Uterus (tissue), 4 donors: ENCODE measurements at regions of chr7 and their contacts with region 1.

Region 1: DNA sequence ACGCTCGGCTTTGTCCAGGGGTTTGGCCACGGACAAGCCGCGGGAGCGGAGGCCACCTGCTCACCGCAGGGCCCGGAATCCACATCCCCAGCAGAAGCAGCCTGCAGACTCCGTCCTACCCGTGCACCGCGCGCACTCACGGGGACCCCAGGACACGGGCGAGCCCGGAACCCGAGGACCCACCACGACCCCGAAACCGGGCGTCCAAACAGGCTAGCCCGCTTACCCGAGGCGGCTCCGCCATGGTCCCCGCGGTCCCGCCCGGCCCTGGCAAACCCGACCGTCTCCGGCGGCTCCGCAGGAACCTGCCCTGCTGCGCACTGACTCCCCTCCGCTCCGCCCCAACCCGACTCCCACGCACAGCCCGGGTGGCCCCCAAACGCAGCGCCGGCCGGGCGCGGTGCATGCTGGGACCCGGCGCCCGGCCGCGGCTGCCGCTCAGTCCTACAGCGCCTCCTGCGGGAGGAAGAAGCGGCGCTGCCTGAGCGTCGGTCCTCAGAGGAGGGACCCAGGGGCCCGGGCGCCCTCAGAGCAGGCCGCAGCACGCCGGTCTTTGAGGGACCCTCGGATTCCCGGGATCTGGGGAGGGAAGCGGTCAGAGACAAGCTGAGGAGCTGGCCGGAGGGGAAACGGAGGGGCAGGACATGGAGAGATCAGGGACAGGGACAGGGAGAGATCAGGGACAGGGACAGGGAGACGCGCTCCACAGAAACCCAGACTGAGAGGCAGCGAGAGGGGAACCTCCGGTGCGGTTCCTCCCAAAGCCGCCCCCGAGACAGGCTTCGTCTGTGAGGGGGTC is at the start of gene ZNF786:
- DNase-seq: peak; percentile 88 to 94
- H3K4me3 ChIP-seq: peak within 1 kb of the TSS; percentile 83 to 86
- H3K27ac ChIP-seq: peak within 1 kb of the TSS; percentile 96 to 98
- H3K4me1 ChIP-seq: no peaks in the 10 kb centered on the region
- H3K27me3 ChIP-seq: no peaks in the 10 kb centered on the region
- CTCF ChIP-seq: peak; percentile 85 to 98 (median 97)
- POLR2A ChIP-seq: peak; percentile 34 to 90
- total RNA-seq, gene ZNF786: 3.6 to 13.7 (median 9.7) TPM

Region 2: GRCh38 chr7:149005241-149006050 is 85.2 kb before region 1 on chr7:
- intact Hi-C with region 1: loop called (anchors 10 kb)
- DNase-seq: peak; percentile 79 to 88
- H3K4me3 ChIP-seq: no peak overlapping the region
- H3K27ac ChIP-seq: no peak overlapping the region
- H3K4me1 ChIP-seq: no peaks in the 10 kb centered on the region
- H3K27me3 ChIP-seq: no peaks in the 10 kb centered on the region
- CTCF ChIP-seq: peak; percentile 81 to 90 (median 84)
- POLR2A ChIP-seq: no peak

Region 3: DNA sequence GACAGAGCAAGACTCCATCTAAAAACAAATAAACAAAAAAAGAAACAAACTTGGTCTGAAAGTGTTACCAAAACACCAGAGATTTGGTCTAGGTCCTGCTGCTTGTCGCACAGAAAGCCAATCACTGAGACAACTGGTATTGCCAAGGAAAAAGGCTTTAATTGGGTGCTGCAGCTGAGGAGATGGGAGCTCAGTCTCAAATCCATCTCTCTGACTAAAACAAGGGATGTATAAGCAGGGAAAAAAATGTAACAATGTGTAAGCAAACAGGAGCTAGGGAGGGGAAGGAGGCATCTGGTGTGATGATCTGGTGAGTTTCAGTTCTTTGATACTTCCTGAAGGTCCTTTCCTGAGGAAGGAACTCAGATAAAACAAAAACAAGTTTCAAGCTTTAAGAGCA is 53.9 kb before region 1 on chr7:
- intact Hi-C with region 1: no loop called
- DNase-seq: no peak
- H3K4me3 ChIP-seq: no peak overlapping the region
- H3K27ac ChIP-seq: no peak overlapping the region
- H3K4me1 ChIP-seq: no peaks in the 10 kb centered on the region
- H3K27me3 ChIP-seq: no peaks in the 10 kb centered on the region
- CTCF ChIP-seq: no peak
- POLR2A ChIP-seq: no peak

Region 4: DNA sequence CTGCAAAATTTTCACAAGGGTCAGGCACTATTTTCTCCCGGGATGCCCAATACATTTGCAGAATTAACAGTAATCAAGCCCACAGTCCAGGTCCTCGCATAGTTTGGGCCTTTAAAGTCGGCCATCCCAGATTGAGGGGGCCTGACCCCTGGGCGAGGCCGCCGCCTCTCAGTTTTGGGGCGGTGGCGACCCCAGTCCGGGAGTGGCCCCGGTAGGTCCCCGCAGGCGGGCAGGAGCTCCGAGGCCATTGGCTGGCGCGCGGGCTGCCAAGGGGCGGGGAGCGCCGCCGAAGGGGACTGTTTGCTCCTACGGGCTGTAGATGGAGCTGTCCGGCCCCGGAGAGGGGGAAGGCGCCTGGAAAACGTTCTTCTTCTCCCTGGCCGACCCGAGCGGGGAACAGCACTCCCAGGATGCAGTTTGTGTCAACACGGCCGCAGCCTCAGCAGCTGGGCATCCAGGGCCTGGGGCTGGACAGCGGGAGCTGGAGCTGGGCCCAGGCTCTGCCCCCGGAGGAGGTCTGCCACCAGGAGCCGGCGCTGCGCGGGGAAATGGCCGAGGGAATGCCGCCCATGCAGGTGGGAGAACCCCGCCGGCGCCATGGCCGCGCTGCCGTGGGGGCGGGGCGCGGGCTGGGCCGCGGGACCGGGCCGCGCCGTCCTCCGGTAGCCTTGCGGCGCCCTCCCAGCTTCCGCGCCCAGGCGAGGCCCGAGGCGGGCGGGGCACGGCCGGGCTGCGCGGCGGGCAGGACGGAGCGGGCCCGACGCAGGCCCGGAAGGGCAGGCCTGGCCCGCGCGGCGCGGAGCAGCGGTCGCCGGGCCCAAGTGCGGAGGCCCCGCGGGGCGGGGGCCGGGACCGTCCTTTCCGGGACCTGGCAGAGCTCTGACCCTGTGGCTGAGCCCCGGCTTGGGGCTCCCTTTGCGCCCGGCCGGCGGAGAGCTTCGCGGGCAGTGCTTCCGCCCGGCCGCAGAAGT is 104.9 kb after region 1 on chr7 and contains the start of gene ZNF282:
- intact Hi-C with region 1: no loop called
- DNase-seq: peak; percentile 83 to 84
- H3K4me3 ChIP-seq: peak within 1 kb of the TSS; percentile 82 to 86
- H3K27ac ChIP-seq: peak within 1 kb of the TSS; percentile 91 to 93
- H3K4me1 ChIP-seq: peaks cover 0 to 11% of the 10 kb centered on the region in 2 donors
- H3K27me3 ChIP-seq: no peaks in the 10 kb centered on the region
- CTCF ChIP-seq: peak; percentile 46 to 83 (median 54)
- POLR2A ChIP-seq: peak in 1 of 2 donors; percentile 54
- total RNA-seq, gene ZNF282: 3.2 to 36.4 (median 24.1) TPM

Region 5: DNA sequence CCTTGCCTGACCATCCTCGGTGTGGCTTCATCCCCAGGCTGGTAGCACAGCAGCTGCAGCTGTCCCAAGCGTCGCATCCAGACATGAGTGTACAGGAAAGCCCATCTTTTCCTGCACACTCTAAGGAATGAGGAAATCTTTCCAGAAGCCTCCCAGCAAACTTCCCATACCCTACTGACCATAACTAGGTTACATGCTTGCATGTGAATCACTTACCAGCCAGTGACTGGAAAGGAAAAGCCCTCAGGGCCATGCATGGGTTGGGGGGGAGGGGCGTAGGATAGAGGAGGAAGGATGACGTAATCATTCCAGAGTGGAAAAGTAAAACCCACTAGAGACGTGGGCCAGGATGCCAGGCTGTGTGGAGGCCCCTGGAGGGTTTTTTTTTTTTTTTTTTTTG is 129.9 kb after region 1 on chr7:
- intact Hi-C with region 1: no loop called
- DNase-seq: no peak
- H3K4me3 ChIP-seq: no peak overlapping the region
- H3K27ac ChIP-seq: no peak overlapping the region
- H3K4me1 ChIP-seq: no peaks in the 10 kb centered on the region
- H3K27me3 ChIP-seq: no peaks in the 10 kb centered on the region
- CTCF ChIP-seq: no peak
- POLR2A ChIP-seq: no peak